HEK293 (cell line): ENCODE measurements at regions of chr6 and their contacts with region 1.

Region 1: DNA sequence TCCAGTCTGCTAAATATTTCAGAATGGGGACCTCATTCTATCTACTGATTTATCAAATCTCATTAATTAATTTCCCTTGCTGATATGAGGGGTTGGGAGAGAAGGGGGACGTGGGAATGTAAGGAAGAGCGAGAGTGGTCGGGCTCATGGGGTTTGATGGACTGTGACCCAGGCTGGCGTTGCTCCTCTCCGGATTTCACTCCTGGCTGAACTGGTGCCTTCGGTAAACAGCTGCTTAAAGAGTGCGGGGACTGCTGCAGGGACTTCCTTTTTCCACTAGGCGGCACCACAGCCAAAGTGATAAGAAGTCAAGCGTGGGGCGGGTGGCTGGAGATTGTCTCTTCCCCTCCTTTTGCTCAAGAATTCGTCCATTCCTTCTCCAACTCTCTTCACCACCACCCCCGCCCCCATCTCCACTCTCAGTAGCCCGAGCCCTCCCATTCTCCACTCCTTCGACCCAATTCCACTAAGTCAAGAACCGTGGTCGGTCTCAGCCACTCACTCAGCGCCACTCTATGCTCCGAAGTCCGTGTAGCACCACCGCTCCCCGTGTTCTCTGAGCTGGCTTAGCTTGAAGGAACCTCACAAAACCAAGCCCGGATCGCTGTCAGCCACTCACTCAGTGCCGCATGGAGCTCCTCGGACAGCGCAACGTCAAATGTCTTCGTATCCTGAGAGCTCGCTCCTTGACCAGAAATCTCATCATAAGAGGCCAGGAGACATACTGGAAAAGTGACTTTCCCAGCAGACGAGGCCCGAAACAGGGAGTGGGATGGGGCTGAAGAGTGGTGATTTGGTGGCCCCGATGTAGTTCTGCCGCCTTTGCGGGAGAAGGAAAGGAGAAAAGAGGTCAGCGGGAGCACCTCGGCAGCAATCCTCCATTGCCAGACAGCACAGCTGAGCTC is 9.7 kb downstream of the TRIM31 start:
- H3K4me3 ChIP-seq: peak overlapping the region; percentile 32
- H3K27ac ChIP-seq: no peak overlapping the region
- H3K4me1 ChIP-seq: peaks cover 12% of the 10 kb centered on the region
- CTCF ChIP-seq: peak; percentile 96

Region 2: DNA sequence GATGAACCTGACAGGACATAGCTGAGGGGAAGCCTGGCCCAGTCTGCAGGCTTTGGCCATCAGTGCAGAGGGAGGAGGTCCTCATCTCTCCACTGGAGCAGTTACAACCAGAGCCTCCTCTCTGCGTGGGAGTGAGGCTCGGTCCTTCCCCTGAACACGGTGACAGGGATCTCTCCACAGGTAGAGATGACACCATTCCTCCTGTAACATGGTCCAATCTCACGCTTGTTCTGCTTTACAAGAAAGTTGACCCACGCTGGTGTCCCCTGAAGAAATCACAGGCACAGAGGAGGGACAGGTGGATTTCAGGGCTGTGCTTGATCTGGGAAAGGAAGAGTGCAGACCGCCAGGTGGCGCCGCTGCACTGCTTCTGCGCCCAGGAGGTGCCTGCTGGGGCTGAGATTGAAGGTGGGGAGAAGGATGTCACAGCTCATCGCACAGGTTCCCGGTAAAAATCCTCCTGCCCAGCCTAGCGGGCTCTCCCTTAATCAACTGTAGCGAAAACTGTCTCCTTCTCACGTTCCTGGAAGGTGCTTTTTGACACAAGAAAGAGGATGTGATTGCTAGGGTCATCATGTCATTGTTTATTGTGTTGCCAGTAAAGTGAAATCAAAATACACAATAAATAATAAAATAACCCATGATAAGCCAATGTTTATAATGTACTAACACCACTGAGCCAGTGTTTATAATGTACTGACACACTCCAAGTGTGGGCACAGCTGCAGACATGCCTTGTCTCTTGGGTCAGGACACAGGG is 255.2 kb before region 1 on chr6:
- CTCF ChIA-PET with region 1: interaction called, 18 read pairs
- POLR2A ChIA-PET with region 1: no interaction called
- H3K4me3 ChIP-seq: no peak overlapping the region
- H3K27ac ChIP-seq: no peak overlapping the region
- H3K4me1 ChIP-seq: no peaks in the 10 kb centered on the region
- CTCF ChIP-seq: peak; percentile 95

Region 3: DNA sequence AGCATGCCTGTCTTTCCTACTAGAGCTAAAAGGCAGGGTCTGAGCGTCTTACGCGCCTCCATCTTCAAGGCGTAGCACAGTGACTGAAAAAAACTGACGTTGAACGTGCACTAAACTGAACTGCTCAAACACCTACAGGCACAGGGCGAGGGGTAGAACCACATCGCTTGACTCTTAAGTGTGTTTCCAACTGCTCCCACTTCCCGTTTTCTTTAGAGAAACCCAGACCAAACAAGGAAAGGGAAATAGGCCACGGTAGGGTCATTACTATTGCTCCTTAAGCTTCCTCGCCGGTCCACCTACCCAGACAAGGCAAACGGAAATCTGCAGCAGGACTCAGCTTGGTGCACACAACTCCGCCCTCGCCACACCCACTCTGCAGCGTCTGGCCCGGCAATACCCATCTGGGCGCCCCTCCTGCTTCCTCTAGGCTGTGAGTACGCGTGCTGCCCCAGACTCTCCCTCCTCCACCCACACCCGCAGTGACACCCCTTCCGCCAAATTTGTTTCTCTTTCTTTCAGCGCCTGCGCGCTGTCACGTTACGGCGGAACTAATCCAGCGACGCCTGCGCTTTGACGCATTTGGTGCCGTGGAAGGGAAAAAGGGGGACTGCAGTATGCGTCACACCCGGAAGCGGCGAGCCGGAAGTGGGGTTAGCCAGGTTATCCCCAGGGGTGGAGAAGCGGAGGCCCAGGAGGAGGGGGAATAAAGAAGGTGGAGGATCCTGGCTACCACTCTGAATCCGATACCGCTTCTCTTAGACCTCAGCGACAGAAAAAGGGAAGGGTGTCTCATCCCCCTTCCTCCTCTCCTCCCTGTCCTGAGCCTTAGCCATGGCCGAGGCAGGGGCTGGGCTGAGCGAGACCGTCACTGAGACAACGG is 36.4 kb before region 1 on chr6 and contains the start of gene PPP1R11:
- CTCF ChIA-PET with region 1: interaction called, 13 read pairs
- POLR2A ChIA-PET with region 1: interaction called, 36 read pairs
- H3K4me3 ChIP-seq: peak within 1 kb of the TSS; percentile 83
- H3K27ac ChIP-seq: peak within 1 kb of the TSS; percentile 59
- H3K4me1 ChIP-seq: peaks cover 10% of the 10 kb centered on the region
- CTCF ChIP-seq: no peak

Region 4: GRCh38 chr6:30154709-30155519 is 51.7 kb after region 1 on chr6:
- CTCF ChIA-PET with region 1: interaction called, 24 read pairs
- POLR2A ChIA-PET with region 1: interaction called, 4 read pairs
- H3K4me3 ChIP-seq: no peak overlapping the region
- H3K27ac ChIP-seq: peak overlapping the region; percentile 67
- H3K4me1 ChIP-seq: peaks cover 27% of the 10 kb centered on the region
- CTCF ChIP-seq: no peak

Region 5: DNA sequence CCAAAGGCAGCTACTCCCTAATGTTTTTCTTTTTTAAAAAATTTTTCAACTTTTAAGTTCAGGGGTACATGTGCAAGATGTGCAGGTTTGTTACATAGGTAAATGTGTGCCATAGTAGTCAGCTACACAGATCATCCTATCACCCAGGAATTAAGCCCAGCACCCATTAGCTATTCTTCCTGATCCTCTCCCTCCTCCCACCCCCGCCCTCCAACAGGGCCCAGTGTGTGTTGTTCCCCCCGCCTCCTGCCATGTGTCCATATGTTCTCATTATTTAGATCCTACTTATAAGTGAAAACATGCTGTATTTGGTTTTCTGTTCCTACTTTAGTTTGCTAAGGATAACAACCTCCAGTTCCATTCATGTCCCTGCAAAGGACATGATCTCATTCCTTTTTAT is 72.5 kb after region 1 on chr6:
- CTCF ChIA-PET with region 1: interaction called, 74 read pairs
- POLR2A ChIA-PET with region 1: interaction called, 3 read pairs
- H3K4me3 ChIP-seq: no peak overlapping the region
- H3K27ac ChIP-seq: no peak overlapping the region
- H3K4me1 ChIP-seq: no peaks in the 10 kb centered on the region
- CTCF ChIP-seq: no peak